Activated CD4-positive, alpha-beta T cell treated with anti-CD3 and anti-CD28 coated beads for 36 hours (primary cell): ENCODE measurements at regions of chr1 and their contacts with region 1.

Region 1: GRCh38 chr1:214328770-214329469 is 48.0 kb downstream of the SMYD2 start:
- DNase-seq: peak; percentile 88
- ATAC-seq: peak; percentile 93
- H3K4me3 Mint-ChIP-seq: no peak overlapping the region
- H3K27ac Mint-ChIP-seq: peak overlapping the region; percentile 23
- H3K4me1 Mint-ChIP-seq: peaks cover 3% of the 10 kb centered on the region
- H3K27me3 Mint-ChIP-seq: no peaks in the 10 kb centered on the region

Region 2: DNA sequence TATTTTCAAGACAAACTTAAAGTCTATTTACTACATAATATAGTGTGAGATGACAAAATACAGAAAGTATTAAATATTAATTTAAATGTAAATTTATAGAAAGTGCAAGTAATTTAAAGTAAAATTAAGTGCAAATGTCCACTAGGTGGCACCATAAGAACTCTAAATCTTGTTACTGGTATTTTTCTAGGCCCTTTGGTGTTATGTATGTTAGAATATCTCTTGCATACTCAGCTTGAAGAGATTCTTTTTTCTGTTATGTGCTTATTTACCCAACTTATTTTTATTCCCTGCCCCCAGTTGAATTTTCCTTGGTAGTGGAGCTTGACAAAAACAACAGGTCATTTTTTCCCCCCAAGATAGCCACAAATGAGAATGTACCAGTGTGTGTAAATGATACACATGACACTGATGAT is 1206.4 kb before region 1 on chr1:
- CTCF ChIA-PET with region 1: interaction called, 4 read pairs
- POLR2A ChIA-PET with region 1: no interaction called
- intact Hi-C with region 1: loop called in 1 of 2 experiments (anchors 5 kb)
- DNase-seq: no peak
- ATAC-seq: no peak
- H3K4me3 Mint-ChIP-seq: no peak overlapping the region
- H3K27ac Mint-ChIP-seq: no peak overlapping the region
- H3K4me1 Mint-ChIP-seq: peaks cover 8% of the 10 kb centered on the region
- H3K27me3 Mint-ChIP-seq: no peaks in the 10 kb centered on the region

Region 3: DNA sequence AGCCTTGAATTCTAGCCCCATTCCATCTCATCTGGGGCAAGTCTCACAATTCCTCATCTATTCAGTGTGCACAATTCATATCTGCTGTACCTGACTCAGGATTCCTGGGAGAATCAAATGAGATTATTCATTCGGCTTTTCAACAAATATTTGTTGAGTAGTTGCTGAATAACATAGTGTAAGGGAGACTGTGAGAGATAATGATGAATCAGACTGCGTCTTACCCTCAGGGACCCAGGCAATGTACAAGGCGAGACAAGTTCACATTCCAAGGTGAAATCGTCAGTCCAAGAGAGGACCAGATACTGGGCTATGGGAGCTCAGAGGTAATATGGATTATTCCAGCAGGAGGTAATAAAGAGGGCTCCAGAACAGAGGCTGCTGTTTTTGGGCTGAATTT is 115.8 kb before region 1 on chr1:
- CTCF ChIA-PET with region 1: interaction called, 98 read pairs
- POLR2A ChIA-PET with region 1: no interaction called
- intact Hi-C with region 1: loop called (anchors 1 kb)
- DNase-seq: no peak
- ATAC-seq: no peak
- H3K4me3 Mint-ChIP-seq: no peak overlapping the region
- H3K27ac Mint-ChIP-seq: no peak overlapping the region
- H3K4me1 Mint-ChIP-seq: peaks cover 4% of the 10 kb centered on the region
- H3K27me3 Mint-ChIP-seq: peaks cover 13% of the 10 kb centered on the region

Region 4: DNA sequence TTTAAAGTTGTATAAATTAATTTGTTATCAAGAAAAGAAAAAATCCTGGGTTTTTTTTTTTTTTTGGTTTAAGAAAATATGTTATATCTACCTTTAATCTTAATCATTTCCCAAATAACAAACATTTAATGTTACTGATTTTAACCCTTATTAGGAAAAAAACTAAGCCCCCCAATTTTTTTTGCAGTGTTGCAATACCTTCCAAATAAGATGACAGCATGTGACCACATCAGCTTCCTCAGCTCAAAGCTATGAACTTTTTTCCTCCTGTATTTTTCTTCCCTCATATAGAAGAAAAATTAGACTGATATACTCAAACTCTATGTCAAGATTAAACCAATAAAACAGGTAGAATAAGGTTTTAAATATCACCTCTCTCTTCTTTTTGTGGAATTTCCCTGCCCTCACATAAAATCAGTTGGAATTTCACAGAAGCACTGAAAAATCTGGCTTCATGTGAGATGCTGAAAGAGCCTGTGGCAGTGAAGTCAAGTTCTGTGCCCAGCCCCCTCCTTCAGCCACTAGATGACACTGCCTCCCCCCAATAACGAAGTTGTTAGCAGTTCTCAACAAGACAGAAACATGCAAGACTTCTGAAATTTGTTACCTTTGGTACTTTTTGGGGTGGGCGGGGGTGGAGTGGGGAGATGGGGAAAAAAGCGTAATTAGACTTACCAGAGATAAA is 57.6 kb before region 1 on chr1:
- CTCF ChIA-PET with region 1: interaction called, 24 read pairs
- POLR2A ChIA-PET with region 1: no interaction called
- intact Hi-C with region 1: no loop called
- DNase-seq: peak; percentile 16
- ATAC-seq: no peak
- H3K4me3 Mint-ChIP-seq: no peak overlapping the region
- H3K27ac Mint-ChIP-seq: no peak overlapping the region
- H3K4me1 Mint-ChIP-seq: peaks cover 6% of the 10 kb centered on the region
- H3K27me3 Mint-ChIP-seq: peaks cover 13% of the 10 kb centered on the region

Region 5: DNA sequence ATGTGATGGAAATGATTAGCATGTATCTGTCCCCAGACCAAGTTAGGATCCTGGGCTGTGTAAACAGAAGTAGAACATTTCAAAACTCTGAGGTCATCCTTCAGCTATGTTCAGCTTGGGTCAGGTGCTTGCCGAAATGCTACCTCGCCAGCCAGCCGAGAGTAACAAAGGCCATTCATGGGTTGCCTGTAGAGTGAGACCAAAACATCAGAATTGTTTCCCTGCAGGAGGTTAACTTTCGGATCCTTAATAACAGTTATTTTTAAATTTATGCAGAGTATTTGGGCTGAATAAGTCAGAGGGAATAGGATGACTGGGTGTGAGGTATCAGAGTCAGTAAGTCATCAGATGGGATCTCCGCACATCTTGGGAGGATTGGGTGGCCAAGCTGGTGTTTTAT is 12.3 kb before region 1 on chr1:
- CTCF ChIA-PET with region 1: interaction called, 108 read pairs
- POLR2A ChIA-PET with region 1: no interaction called
- intact Hi-C with region 1: no loop called
- DNase-seq: no peak
- ATAC-seq: no peak
- H3K4me3 Mint-ChIP-seq: no peak overlapping the region
- H3K27ac Mint-ChIP-seq: no peak overlapping the region
- H3K4me1 Mint-ChIP-seq: peaks cover 6% of the 10 kb centered on the region
- H3K27me3 Mint-ChIP-seq: no peaks in the 10 kb centered on the region

Region 6: DNA sequence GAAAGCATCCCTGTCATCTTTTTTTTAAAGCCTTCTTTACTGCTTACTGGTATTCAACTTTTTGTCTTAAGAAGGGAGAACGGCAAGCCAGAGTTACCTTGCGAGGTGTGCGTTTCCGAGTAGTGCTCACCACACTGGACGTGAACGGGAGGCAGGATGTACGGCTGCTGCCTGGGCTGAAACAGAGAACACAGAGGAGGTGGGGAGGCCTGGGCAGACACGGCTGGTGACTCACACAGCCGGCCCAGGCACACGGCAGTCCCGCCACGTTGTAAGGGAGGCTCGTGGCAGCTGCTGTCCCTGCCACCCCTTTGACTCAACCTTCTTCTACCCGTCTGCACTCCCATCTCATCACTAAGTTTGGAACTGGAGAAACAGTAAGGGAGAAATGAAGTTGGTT is 57.8 kb after region 1 on chr1:
- CTCF ChIA-PET with region 1: interaction called, 12 read pairs
- POLR2A ChIA-PET with region 1: no interaction called
- intact Hi-C with region 1: no loop called
- DNase-seq: peak; percentile 18
- ATAC-seq: peak; percentile 53
- H3K4me3 Mint-ChIP-seq: no peak overlapping the region
- H3K27ac Mint-ChIP-seq: peak overlapping the region; percentile 40
- H3K4me1 Mint-ChIP-seq: peaks cover 6% of the 10 kb centered on the region
- H3K27me3 Mint-ChIP-seq: no peaks in the 10 kb centered on the region

Region 7: GRCh38 chr1:214398490-214398889 is 69.6 kb after region 1 on chr1:
- CTCF ChIA-PET with region 1: no interaction called
- POLR2A ChIA-PET with region 1: no interaction called
- intact Hi-C with region 1: no loop called
- DNase-seq: no peak
- ATAC-seq: no peak
- H3K4me3 Mint-ChIP-seq: no peak overlapping the region
- H3K27ac Mint-ChIP-seq: no peak overlapping the region
- H3K4me1 Mint-ChIP-seq: peaks cover 18% of the 10 kb centered on the region
- H3K27me3 Mint-ChIP-seq: peaks cover 7% of the 10 kb centered on the region

Region 8: DNA sequence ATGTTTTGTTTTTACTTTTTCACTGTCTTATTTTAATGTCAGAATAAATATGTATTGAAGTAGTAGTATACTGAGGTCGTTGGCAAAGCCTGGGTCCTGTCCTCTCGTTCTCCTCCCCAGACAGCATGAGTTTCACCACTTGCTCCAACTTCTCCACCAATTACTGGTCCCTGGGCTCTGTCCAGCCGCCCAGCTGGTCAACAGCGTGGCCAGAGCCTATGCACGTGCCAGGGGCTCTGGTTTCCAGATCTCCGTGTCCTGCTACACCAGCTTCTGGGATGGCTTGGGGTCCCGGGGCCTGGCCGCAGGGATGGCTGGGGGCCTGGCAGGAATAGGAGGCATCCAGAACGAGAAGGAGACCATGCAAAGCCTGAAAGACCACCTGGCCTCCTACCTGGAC is 203.2 kb after region 1 on chr1:
- CTCF ChIA-PET with region 1: no interaction called
- POLR2A ChIA-PET with region 1: no interaction called
- intact Hi-C with region 1: no loop called
- DNase-seq: no peak
- ATAC-seq: no peak
- H3K4me3 Mint-ChIP-seq: no peak overlapping the region
- H3K27ac Mint-ChIP-seq: no peak overlapping the region
- H3K4me1 Mint-ChIP-seq: no peaks in the 10 kb centered on the region
- H3K27me3 Mint-ChIP-seq: peaks cover under 1% of the 10 kb centered on the region

Region 9: GRCh38 chr1:215383669-215384068 is 1054.7 kb after region 1 on chr1:
- CTCF ChIA-PET with region 1: no interaction called
- POLR2A ChIA-PET with region 1: no interaction called
- intact Hi-C with region 1: no loop called
- DNase-seq: no peak
- ATAC-seq: no peak
- H3K4me3 Mint-ChIP-seq: no peak overlapping the region
- H3K27ac Mint-ChIP-seq: no peak overlapping the region
- H3K4me1 Mint-ChIP-seq: no peaks in the 10 kb centered on the region
- H3K27me3 Mint-ChIP-seq: no peaks in the 10 kb centered on the region

Region 10: GRCh38 chr1:215526553-215527151 is 1197.7 kb after region 1 on chr1:
- CTCF ChIA-PET with region 1: interaction called, 6 read pairs
- POLR2A ChIA-PET with region 1: no interaction called
- intact Hi-C with region 1: loop called (anchors 5 kb)
- DNase-seq: no peak
- ATAC-seq: peak; percentile 33
- H3K4me3 Mint-ChIP-seq: no peak overlapping the region
- H3K27ac Mint-ChIP-seq: no peak overlapping the region
- H3K4me1 Mint-ChIP-seq: no peaks in the 10 kb centered on the region
- H3K27me3 Mint-ChIP-seq: peaks cover 19% of the 10 kb centered on the region